Mucosa of descending colon (tissue), 3 donors: ENCODE measurements at regions of chr11 and their contacts with region 1.

Region 1: DNA sequence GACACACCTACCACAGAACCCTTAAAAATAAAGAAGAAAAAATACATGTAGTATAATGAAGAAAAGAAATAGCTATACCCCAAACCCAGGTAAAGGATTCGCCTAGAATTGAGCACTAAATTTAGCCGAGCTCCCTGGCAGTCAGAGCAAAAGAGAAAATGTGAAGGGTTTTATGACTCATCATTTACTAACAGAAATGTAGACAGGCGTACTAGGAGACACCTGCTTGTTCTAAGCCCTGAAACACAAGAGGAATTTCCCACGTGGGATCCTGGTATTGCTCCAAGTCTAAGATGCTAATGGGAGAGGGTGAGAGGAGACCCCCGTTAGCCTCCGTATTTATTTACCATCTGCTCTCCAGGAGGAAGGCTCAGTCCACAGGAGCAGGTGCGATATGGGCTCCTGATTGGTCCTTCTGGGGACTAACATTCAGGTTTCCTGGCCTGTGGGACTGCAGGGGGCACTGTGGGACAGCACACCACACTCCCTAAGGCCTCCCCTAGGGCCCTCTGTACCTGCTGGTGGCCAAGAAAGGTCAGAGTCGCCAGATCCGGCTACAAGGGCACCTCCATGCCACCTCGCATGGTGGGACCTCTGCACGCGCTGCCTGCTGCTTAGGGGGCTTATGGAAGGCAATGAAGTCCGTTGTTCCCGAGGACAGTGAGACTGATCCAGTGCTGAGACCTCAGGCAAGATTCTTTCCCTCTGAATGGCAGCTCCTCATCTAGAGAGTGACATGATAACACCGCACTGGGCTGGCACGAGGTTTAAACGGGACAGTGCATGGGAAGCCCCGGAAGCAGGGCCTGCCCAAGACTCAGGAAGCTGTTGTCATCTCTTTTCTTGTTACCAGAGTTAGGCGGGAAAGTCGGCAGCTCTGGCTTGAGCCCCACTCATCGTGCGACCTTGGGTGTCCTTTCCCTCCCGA is 25.8 kb downstream of the KCNC1 start:
- DNase-seq: peak; percentile 50 to 80 (median 80)
- ATAC-seq: peak; percentile 92
- H3K4me3 ChIP-seq: no peak overlapping the region
- H3K4me1 ChIP-seq: no peaks in the 10 kb centered on the region
- CTCF ChIP-seq: peak; percentile 42

Region 2: DNA sequence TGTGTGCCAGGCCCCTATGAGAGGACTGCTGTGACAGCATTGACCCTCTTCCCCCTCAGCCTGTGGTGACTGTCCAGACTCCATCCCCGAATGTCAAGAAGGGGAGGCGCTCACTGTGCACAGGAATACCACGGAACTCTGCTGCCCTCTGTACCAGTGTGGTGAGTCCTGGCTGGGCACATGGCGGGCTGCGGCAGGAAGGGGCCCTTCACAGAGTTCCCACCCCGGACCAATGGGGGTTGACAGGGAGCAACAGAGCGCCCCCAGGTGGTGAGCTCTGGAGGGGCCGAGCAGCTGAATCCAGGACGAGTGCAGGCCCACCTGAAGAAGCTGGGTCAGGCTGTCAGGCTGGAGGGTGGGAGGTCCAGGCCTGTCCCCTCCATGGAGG is 124.8 kb before region 1 on chr11:
- intact Hi-C with region 1: no loop called
- DNase-seq: no peak
- ATAC-seq: no peak
- H3K4me3 ChIP-seq: no peak overlapping the region
- H3K4me1 ChIP-seq: no peaks in the 10 kb centered on the region
- CTCF ChIP-seq: no peak

Region 3: GRCh38 chr11:17827006-17827405 is 66.6 kb after region 1 on chr11:
- intact Hi-C with region 1: loop called in 1 of 2 experiments (anchors 5 kb)
- DNase-seq: no peak
- ATAC-seq: no peak
- H3K4me3 ChIP-seq: no peak overlapping the region
- H3K4me1 ChIP-seq: no peaks in the 10 kb centered on the region
- CTCF ChIP-seq: no peak

Region 4: DNA sequence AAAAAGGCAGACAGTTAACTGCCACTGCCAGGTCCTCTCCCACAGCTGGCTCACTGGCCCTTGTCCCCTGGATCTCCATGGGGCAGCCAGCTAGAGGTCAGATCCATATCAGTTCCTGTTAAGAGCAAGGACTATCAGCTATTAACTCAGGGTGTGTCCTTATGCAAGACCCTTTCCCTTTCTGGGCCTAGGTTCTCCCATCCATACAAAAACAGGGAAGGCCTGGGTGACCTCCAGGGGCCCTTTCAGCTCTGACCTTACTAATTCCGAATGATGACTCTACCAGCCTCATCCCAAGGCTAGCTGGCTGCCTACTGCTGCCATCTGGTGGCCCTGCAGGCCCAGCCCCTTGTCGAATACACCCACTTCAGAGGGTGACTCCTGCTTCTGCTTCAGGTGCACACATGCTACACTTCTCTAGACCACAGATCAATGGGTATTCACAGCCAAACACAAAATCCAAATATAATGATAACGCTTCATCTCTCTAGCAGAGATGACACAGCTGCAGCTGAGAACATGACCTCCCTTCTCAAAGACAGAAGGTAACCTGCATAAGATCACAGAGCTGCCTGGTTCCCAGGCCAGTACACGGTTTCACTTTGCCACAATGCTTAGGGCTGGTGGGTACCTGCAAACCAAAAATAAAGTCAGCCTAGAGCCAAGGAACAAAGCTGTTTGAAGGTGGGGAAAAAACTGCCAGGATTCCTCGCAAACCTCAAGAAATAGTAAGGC is 218.4 kb after region 1 on chr11:
- intact Hi-C with region 1: loop called (anchors 10 kb)
- DNase-seq: peak in 2 of 3 donors; percentile 65 to 67
- ATAC-seq: peak; percentile 84
- H3K4me3 ChIP-seq: no peak overlapping the region
- H3K4me1 ChIP-seq: no peaks in the 10 kb centered on the region
- CTCF ChIP-seq: peak; percentile 44